Heart left ventricle (tissue), 16 donors: ENCODE measurements at regions of chr22 and their contacts with region 1.

Region 1: DNA sequence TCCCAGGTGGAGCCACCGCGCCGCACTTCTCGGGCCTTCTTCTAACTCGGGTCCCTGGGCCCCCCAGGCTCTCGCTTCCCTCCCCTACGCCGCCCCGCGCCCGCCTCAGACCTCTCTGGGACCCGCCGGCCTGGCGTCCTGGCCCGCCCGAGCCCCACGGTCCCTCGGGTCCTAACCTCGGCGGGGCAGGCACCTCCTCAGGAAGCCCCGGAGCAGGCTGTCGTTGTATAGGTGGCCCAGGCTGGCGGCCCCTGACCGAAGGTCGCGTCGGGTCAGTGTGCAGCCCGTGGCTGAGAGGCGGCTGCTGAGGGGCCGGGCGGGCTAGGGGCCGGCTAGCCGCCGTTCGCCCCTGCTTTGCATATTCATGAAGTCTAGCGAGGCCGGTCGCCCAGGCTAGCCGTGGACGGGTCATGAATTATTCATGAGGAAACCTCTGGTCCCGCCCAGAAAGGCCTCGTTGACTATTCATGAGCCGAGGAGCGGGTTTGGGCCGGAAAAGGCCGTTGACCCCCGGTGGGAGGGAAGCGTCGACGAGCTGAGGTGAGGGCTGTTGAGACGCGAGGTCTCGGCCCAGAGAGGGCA is at the start of gene HORMAD2:
- DNase-seq: no peak
- ATAC-seq: no peak
- H3K4me3 ChIP-seq: peak within 1 kb of the TSS in 10 of 12 donors; percentile 5 to 42 (median 24)
- H3K27ac ChIP-seq: no peak within 1 kb of the TSS
- H3K4me1 ChIP-seq: peaks cover 0 to 8% (median 0%) of the 10 kb centered on the region in 12 donors
- H3K27me3 ChIP-seq: peaks cover 4 to 44% (median 11%) of the 10 kb centered on the region in 9 donors
- CTCF ChIP-seq: no peak
- POLR2A ChIP-seq: no peak
- total RNA-seq, gene HORMAD2: not detected

Region 2: DNA sequence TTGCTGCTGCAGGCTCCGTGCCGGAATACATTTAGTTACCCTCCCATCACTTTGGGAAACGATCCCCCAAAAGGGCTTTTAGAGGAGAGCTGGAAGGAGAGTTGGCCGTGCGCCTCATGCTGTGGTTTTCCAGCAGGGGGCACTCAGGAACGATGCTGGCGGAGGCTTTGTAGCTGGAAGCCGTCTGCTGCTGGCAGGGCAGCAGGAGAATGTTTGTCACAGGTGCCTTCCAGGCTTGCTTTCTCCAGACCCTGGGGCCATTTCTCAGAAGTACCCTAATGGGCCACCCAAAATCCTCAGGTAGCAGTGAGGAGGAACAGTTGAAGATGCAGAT is 390.2 kb before region 1 on chr22:
- intact Hi-C with region 1: loop called in 4 of 10 experiments (anchors 5 to 10 kb)
- DNase-seq: peak; percentile 45 to 76 (median 59)
- ATAC-seq: peak in 3 of 4 donors; percentile 66 to 77 (median 74)
- H3K4me3 ChIP-seq: no peak overlapping the region
- H3K27ac ChIP-seq: no peak overlapping the region
- H3K4me1 ChIP-seq: peaks cover 0 to 4% (median 0%) of the 10 kb centered on the region in 12 donors
- H3K27me3 ChIP-seq: no peaks in the 10 kb centered on the region
- CTCF ChIP-seq: peak; percentile 51 to 78 (median 64)
- POLR2A ChIP-seq: no peak

Region 3: DNA sequence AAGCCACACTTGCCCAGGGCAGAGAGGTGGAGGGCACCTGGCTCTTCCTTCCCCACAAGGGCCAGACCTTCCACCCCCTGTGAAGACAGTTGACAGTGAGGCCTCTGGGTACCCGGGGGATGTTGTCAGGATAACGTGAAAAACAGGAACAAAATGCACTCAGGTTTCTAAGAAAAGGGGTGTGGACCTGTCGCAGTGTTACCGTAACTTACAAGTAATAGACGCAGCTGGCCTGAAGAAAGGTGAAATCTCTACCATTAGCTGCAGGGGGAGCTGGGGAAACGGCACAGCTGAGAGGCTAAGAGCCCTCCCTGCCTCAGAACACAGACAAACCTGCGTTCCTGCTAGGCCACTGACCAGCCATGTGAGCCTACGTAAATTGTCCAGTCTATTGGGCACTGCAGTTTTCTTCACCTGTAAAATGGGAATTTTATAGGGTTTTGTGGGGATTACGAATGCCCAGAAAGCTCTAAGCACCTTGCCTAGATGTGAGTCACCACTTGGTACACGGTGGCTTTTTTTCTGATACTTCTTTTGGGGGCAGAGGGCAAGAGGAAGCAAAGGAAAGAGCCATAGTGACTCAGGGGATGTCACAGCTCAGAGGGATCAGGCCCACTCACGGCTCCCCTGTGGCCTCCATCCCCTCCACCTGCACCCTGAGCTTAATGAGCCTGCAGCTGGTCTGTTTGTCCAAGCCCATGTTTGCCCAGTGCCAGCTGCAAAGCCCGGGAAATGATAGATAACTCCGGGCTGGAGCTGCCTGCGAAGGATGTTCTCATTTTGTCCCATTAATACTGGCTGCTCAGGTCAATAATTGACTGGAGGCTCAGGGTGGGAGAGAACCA is 378.7 kb before region 1 on chr22:
- intact Hi-C with region 1: loop called in 1 of 10 experiments (anchors 10 kb)
- DNase-seq: no peak
- ATAC-seq: peak in 1 of 4 donors; percentile 11
- H3K4me3 ChIP-seq: no peak overlapping the region
- H3K27ac ChIP-seq: no peak overlapping the region
- H3K4me1 ChIP-seq: peaks cover 0 to 24% (median 7%) of the 10 kb centered on the region in 12 donors
- H3K27me3 ChIP-seq: peaks cover 0 to 42% (median 16%) of the 10 kb centered on the region in 9 donors
- CTCF ChIP-seq: peak in 1 of 12 donors; percentile 7
- POLR2A ChIP-seq: no peak

Region 4: GRCh38 chr22:30031764-30032455 is 48.1 kb before region 1 on chr22:
- intact Hi-C with region 1: loop called in 1 of 10 experiments (anchors 2 kb)
- DNase-seq: no peak
- ATAC-seq: no peak
- H3K4me3 ChIP-seq: no peak overlapping the region
- H3K27ac ChIP-seq: no peak overlapping the region
- H3K4me1 ChIP-seq: peaks cover 0 to 18% (median 12%) of the 10 kb centered on the region in 12 donors
- H3K27me3 ChIP-seq: no peaks in the 10 kb centered on the region
- CTCF ChIP-seq: no peak
- POLR2A ChIP-seq: no peak

Region 5: DNA sequence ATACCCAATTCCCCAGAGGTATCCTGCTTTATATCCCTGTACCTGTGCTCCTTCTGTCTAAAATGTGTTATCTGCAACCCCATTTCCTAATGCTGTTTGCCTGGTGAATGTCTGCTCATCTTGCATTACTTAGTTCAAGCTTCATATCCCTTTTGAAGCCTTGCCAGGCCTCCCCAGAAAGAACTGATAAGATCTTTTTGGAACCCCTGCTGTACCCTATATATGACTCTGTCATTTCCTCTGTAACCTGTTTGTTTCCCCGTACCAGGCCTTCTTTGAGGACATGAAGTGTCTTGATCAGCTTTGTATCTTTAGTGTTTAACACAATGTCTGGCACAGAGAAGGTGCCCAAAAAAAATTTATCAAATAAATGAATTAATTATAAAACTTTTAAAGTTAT is 89.0 kb after region 1 on chr22:
- intact Hi-C with region 1: no loop called
- DNase-seq: no peak
- ATAC-seq: no peak
- H3K4me3 ChIP-seq: no peak overlapping the region
- H3K27ac ChIP-seq: no peak overlapping the region
- H3K4me1 ChIP-seq: no peaks in the 10 kb centered on the region
- H3K27me3 ChIP-seq: peaks cover 0 to 66% (median 5%) of the 10 kb centered on the region in 9 donors
- CTCF ChIP-seq: no peak
- POLR2A ChIP-seq: no peak